RWPE1 (cell line): ENCODE measurements at regions of chr11 and their contacts with region 1.

Region 1: DNA sequence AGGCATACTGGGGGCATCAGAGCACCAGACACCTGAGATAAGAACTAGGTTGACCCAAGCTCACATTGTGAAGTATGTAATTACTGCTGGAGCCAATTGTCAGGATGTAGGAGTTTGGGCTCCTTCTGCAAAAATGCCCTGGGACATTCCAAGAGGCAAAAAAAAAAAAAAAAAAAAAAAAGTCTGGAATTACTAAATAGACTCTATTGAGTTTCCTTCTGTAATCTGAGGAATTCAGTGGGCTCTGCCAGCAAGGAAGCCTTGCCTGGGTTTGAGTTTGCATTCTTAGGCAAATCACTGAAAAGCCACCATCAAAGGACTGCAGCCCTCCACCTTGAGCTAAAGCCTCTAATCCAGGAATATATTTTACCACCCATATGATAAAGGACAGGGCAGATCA is 8.0 kb upstream of the CAVIN3 start:
- DNase-seq: no peak
- H3K27ac ChIP-seq: no peak overlapping the region
- CTCF ChIP-seq: no peak

Region 2: DNA sequence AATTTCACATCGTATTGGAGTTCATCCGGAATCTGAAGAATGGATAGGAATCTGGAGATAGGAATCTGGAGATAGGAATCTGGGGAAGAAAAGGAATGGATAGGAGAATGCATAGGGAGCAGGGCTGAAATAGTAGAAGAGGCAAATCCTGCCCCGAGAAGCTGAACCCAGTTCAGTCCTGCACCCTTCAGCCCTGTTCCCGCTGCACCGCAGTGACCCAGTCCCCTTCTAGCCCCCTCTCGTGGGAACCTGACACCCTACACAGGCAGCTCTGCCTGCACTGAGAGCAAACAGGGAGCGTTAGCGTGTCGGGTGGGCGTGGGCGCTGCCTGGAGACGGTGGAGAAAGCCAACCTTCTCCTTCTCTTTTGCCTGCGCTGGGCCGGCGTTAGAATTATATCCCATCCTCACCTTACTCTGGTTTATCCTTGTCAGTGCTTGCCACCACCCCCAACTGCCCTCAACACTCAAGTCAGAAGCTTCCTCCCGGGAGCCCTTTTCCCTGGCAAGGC is 69.7 kb before region 1 on chr11:
- CTCF ChIA-PET with region 1: no interaction called
- POLR2A ChIA-PET with region 1: no interaction called
- DNase-seq: no peak
- H3K27ac ChIP-seq: no peak overlapping the region
- CTCF ChIP-seq: no peak

Region 3: DNA sequence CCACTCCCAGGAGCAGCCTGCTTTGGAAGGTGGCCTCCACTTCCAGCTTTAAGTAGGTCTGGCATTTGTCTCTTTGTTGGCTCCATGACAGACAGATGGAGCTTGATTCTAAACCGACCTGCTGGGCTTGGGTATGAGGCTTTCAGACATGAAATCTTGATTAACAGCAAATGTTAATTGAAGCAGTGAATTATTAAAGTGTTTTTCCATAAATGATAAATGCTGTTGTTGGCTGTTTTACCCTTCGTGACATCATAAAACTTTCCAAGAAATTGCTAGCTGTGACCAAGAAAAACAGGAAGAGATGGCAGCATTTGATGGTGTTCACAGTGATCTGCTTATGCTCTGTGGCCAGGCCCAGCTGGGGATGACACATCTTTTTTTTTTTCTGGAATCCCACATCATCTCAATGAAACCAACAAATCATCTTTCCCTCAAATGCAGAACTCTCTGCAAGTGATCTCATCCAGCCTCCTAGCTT is 826.6 kb after region 1 on chr11:
- CTCF ChIA-PET with region 1: no interaction called
- POLR2A ChIA-PET with region 1: no interaction called
- DNase-seq: no peak
- H3K27ac ChIP-seq: no peak overlapping the region
- CTCF ChIP-seq: no peak

Region 4: GRCh38 chr11:7690648-7691047 is 1362.3 kb after region 1 on chr11:
- CTCF ChIA-PET with region 1: no interaction called
- POLR2A ChIA-PET with region 1: interaction called, 10 read pairs
- DNase-seq: no peak
- H3K27ac ChIP-seq: no peak overlapping the region
- CTCF ChIP-seq: no peak